ENCODE measurements at regions of chr20 and their contacts with region 1.

Region 1: DNA sequence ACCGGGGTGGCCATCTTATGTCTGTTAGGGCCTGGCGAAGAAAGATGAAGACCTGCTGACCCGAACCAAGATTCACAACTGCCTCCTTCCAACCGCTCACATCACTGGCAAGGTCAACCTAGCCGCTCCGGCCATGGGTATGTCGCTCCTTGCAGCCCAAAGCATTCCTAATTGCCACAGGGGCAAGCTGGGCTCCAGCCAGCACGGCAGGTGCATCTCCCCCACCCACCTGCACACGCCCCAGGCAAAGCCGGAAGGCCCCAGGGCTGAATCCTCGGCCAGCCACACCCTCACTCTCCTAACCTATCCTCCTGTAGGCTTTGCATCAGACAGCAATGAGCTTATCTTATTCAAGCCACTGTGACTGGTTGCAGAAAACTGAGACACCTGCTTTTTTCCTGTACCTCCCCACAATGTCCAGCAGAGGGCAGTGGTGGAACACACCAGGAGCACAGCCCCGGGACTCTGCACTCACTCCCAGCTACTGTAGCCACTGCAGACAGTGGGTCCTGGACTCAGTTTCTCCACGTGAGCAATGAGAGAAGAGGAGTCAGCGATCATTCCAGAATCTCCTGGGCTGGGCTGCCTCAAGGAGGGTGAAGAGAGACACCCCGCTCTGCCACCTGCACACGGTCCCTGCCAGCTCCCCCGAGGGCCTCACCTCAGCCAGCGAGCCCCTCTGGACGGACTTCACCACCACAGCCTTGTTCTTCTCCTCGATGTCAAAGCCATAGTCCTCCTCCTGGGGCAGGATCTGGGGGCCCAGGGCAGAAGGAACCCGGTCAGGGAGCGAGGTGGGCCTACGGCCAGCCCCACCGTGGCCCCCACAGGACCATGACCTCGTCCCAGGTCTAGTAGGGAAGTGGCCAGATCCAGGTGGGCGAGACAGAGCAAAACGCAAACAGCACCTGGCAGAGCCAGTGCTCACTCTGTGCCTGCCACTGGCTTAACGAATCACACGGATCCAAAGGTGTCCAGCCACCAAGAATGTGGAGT is 170.0 kb downstream of the PREX1 start:
- DNase-seq: peak in 1 of 2 experiments; percentile 75
- H3K4me3 ChIP-seq: no peak overlapping the region
- H3K27ac ChIP-seq: no peak overlapping the region
- H3K4me1 ChIP-seq: no peaks in the 10 kb centered on the region; a peak in 1 of 7 replicates
- H3K27me3 ChIP-seq: no peaks in the 10 kb centered on the region
- CTCF ChIP-seq: peak; percentile 85 to 96 (median 87)
- EP300 ChIP-seq: no peak
- POLR2A ChIP-seq: no peak
- RAD21 ChIP-seq: peak; percentile 96 to 99

Region 2: DNA sequence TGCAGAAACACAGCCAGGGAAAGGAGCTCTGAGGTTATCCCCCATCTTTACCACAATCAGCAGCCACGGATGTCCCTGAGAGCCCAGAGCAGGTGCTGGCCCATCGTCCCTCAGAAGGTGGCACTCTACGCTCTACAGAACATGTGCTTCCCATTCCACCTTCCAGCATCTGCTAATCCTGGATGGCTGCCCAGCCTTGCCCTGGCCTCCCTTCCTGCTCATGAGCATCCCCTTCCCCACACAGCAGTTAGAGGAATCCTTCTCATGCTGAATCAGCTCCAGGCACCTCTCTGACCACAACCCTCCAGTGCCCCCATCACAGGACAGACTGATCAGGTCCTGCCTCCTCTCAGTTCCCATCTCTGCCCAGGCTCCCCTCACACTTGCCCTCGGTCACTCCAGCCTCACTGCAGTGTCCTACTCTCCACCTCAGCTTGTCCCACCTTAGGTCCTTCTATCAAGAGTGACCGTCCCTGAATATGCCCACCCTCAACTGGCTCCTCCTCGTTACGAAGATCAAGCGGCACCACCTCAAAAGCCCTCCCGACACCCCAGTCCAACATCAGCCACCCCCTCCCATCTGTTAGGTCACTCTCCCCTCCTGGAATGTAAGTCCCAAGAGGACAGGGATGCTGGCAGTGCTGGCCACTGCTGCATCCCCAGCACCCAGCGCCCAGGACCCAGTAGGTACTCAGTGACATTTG is 112.6 kb before region 1 on chr20:
- CTCF ChIA-PET with region 1: no interaction called
- POLR2A ChIA-PET with region 1: no interaction called
- DNase-seq: no peak
- H3K4me3 ChIP-seq: no peak overlapping the region
- H3K27ac ChIP-seq: no peak overlapping the region
- H3K4me1 ChIP-seq: 0 out of 7 replicates have a peak, but pooled peaks cover 0 to 3% (median 0%) of the 10 kb centered on the region in 4 experiments
- H3K27me3 ChIP-seq: no peaks in the 10 kb centered on the region
- CTCF ChIP-seq: peak in 2 of 3 experiments; percentile 22 to 27; a peak in 3 of 4 replicates
- EP300 ChIP-seq: no peak
- POLR2A ChIP-seq: no peak
- RAD21 ChIP-seq: peak; percentile 26 to 46; a peak in 3 of 4 replicates

Region 3: DNA sequence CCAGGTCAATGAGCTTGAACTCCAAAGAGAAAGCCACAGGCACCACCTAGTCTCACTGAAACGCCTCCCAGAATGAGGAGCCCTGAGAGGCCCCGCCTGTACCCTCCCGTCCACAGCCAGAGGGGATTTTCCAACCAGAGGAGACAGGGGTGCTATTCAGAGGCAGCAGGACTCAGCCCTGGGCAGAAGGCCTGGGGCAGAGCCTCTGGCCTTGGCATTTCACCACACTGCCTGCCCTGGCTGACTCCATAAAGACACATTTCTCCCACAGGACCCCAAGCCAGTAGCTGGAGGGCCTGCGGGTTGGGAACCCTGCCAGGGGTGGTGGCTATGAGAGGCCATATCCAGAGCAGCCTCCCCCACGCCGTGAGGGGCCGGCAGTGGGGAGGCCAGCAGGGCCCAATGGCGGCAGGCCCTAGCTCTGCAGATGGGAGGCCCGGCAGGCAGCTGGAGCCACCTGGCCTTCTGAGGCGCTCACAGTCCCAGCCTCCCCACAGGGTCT is 10.7 kb after region 1 on chr20:
- CTCF ChIA-PET with region 1: interaction called, 27 read pairs
- POLR2A ChIA-PET with region 1: no interaction called
- DNase-seq: no peak
- H3K4me3 ChIP-seq: no peak overlapping the region
- H3K27ac ChIP-seq: no peak overlapping the region
- H3K4me1 ChIP-seq: no peaks in the 10 kb centered on the region; a peak in 1 of 7 replicates
- H3K27me3 ChIP-seq: no peaks in the 10 kb centered on the region
- CTCF ChIP-seq: no peak
- EP300 ChIP-seq: no peak
- POLR2A ChIP-seq: no peak
- RAD21 ChIP-seq: no peak

Region 4: DNA sequence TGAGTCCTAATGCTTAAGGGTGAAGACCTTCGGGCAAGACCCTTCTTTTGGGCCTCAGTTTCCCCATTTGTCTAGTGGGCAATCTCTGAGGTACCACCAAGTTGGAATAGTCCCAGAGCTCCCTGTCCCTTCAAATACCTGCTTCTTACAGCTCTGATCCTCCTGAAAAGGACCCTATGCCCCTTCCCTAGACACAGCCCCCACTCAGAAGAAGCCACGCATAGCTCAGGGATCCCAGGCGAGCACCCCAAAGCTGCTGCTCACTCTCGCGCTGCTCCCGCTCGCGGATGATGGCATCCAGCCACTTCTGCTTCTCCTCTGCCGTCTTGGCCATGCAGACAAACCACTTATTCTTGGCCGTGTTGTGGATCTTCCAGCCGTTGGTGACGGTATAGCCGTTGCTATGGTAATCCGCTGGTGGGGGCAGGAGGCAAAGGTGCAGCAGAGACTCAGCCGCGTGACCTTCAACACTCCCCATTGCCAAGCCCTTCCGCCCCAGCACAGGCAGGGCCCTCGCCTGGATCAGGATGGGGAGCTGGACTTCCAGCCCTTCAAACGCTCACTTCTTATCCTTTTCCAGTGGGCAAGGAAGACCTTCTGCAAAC is 33.0 kb after region 1 on chr20:
- CTCF ChIA-PET with region 1: interaction called, 186 read pairs
- POLR2A ChIA-PET with region 1: interaction called, 3 read pairs
- DNase-seq: no peak
- H3K4me3 ChIP-seq: no peak overlapping the region
- H3K27ac ChIP-seq: no peak overlapping the region
- H3K4me1 ChIP-seq: peaks cover 0 to 3% (median 0%) of the 10 kb centered on the region in 4 experiments; a peak in 1 of 7 replicates
- H3K27me3 ChIP-seq: no peaks in the 10 kb centered on the region
- CTCF ChIP-seq: no peak
- EP300 ChIP-seq: no peak
- POLR2A ChIP-seq: no peak
- RAD21 ChIP-seq: no peak

Region 5: GRCh38 chr20:48717095-48717672 is 59.4 kb after region 1 on chr20:
- CTCF ChIA-PET with region 1: interaction called, 15 read pairs
- POLR2A ChIA-PET with region 1: no interaction called
- DNase-seq: no peak
- H3K4me3 ChIP-seq: no peak overlapping the region
- H3K27ac ChIP-seq: no peak overlapping the region
- H3K4me1 ChIP-seq: peaks cover 0 to 3% (median 0%) of the 10 kb centered on the region in 4 experiments; a peak in 1 of 7 replicates
- H3K27me3 ChIP-seq: no peaks in the 10 kb centered on the region
- CTCF ChIP-seq: no peak
- EP300 ChIP-seq: no peak
- POLR2A ChIP-seq: no peak
- RAD21 ChIP-seq: no peak

Region 6: DNA sequence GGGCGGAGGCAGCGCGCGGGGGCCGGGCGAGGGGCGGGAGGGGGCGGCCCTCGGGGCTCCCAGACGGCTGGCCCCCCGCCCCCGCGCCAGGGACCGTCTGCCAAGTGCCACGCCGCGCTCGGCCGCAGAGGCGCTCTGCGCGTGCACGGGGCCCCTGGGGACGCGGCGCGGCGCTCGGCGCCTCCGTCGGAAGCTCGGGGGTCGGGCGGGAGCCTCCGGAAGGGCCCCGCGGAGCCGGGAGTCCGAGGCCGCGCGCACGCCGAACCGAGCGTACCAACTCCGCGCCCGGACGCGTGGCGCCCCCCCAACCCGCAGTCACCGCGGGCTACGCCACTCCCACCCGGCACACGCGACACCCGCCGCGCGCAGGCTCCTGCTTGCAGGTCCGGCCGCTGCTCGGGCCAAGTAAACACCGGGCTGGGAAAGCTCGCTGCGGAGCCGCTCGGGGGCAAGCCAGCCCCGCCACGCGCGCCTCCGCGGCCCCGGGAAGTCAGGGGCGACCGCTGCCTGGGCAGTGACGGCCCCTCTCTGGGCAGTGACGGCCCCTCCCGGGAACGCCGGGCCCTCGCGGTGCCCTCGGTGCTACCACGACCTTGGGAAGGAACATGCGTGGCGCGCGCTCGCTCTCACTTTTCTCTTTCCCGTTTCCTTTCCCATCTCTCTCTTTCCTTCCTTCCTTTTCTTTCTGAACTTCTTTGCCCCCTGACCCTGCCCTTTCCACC is 170.4 kb after region 1 on chr20:
- CTCF ChIA-PET with region 1: interaction called, 35 read pairs
- POLR2A ChIA-PET with region 1: interaction called, 3 read pairs
- DNase-seq: peak; percentile 34 to 91
- H3K4me3 ChIP-seq: peak overlapping the region; percentile 47 to 80 (median 54)
- H3K27ac ChIP-seq: no peak overlapping the region
- H3K4me1 ChIP-seq: peaks cover 0 to 9% (median 3%) of the 10 kb centered on the region in 4 experiments; a peak in 5 of 7 replicates
- H3K27me3 ChIP-seq: peaks cover 0 to 45% (median 26%) of the 10 kb centered on the region in 4 experiments; a peak in 6 of 7 replicates
- CTCF ChIP-seq: no peak
- EP300 ChIP-seq: no peak
- POLR2A ChIP-seq: no peak
- RAD21 ChIP-seq: peak in 1 of 2 experiments; percentile 15; a peak in 1 of 4 replicates

Region 7: GRCh38 chr20:48897246-48897994 is 239.6 kb after region 1 on chr20:
- CTCF ChIA-PET with region 1: interaction called, 67 read pairs
- POLR2A ChIA-PET with region 1: no interaction called
- DNase-seq: no peak
- H3K4me3 ChIP-seq: no peak overlapping the region
- H3K27ac ChIP-seq: no peak overlapping the region
- H3K4me1 ChIP-seq: no peaks in the 10 kb centered on the region
- H3K27me3 ChIP-seq: no peaks in the 10 kb centered on the region
- CTCF ChIP-seq: no peak
- EP300 ChIP-seq: no peak
- POLR2A ChIP-seq: no peak
- RAD21 ChIP-seq: no peak

Region 8: DNA sequence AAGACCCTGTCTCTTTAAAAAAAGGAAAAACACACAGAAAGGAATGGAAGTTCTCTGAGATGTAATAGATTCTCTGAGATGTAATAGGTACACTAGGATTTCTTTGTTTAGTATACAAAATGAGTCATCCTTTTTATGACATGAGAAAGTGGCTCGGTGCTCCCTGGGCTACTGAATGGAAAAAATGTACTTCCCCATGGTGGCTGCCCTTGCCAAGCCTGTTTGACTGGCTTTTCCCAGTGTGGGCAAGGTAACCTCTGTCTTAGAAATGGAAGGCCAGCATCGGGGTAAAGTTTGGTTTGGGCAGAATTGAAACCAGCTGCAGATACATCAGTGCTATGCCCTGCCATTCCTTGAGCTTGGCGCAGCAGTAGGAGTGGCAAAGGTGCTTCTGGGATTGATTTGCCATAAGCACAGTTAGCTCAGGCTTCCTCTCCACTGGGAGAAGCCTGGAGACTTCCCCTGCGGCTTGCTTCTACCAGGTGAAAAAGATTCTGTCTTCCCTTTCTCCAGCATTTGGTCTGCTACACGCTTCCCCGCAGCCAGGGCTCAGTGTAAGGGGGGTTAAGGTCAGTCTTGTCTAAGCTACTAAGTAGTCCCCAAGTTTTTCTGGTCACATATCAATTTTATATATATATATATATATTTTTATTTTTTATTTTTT is 288.2 kb after region 1 on chr20:
- CTCF ChIA-PET with region 1: interaction called, 39 read pairs
- POLR2A ChIA-PET with region 1: no interaction called
- DNase-seq: no peak
- H3K4me3 ChIP-seq: no peak overlapping the region
- H3K27ac ChIP-seq: no peak overlapping the region
- H3K4me1 ChIP-seq: peaks cover 0 to 2% (median 0%) of the 10 kb centered on the region in 4 experiments; a peak in 1 of 7 replicates
- H3K27me3 ChIP-seq: no peaks in the 10 kb centered on the region
- CTCF ChIP-seq: no peak
- EP300 ChIP-seq: no peak
- POLR2A ChIP-seq: no peak
- RAD21 ChIP-seq: no peak